ENCODE measurements at regions of chr12 and their contacts with region 1.

Region 1: GRCh38 chr12:123979566-123979965 is 6.6 kb downstream of the ZNF664 start:
- DNase-seq: no peak
- H3K4me3 ChIP-seq: no peak overlapping the region
- CTCF ChIP-seq: no peak
- POLR2A ChIP-seq: no peak

Region 2: GRCh38 chr12:123150744-123151456 is 828.7 kb before region 1 on chr12 and contains the start of gene PITPNM2:
- intact Hi-C with region 1: loop called (anchors 5 kb)
- DNase-seq: peak in 1 of 2 donors; percentile 87
- H3K4me3 ChIP-seq: peak within 1 kb of the TSS; percentile 74
- CTCF ChIP-seq: no peak
- POLR2A ChIP-seq: no peak
- total RNA-seq, gene PITPNM2: 3.2 to 6.5 (median 4.2) TPM